ENCODE measurements at regions of chr17 and their contacts with region 1.

Region 1: DNA sequence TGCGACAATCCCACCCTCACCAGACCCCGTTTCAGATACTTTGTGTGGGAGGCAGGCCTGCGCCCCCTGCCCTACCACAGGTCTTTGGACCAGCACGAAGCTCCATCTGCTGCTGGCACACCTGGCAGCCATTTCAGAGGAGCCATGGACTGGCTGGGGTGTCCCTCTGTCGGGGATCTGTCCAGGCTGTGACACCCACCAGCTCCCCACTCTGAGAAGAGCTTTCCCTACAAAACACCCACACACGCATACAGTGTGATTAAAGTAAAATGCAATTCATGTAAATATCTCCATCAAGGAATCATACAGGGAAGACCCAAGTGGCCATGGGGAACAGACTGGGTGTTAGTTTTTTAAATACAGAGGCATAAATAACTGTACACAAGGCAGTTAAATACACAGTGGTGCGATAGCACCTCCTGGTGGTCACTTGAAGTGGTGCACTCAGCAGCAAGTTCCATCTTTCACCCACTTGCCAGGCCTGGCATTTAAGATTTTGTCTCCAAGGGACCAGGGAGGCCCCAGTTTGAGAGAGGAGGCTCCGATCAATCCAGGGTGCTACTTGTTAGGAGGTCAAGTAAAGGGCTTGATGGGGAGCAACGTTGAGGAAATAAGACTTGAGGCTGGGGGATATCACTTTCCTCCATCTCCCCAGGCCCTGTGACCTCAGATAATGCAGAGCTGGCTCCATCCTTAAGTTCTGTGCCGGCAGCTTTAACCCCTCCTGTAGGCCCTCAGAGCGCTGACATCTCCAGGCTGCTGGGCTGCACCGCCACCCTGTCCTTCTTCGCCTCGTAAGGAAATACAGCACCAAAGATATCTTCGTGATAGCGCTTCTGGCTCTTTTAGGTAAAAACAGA is 43.6 kb downstream of the NOS2 start:
- DNase-seq: peak in 3 of 5 donors; percentile 41 to 59 (median 53)
- H3K4me3 ChIP-seq: no peak overlapping the region
- H3K27ac ChIP-seq: no peak overlapping the region
- H3K4me1 ChIP-seq: no peaks in the 10 kb centered on the region
- H3K27me3 ChIP-seq: no peaks in the 10 kb centered on the region
- CTCF ChIP-seq: peak in 2 of 3 donors; percentile 25 to 39
- EP300 ChIP-seq: no peak
- POLR2A ChIP-seq: no peak

Region 2: GRCh38 chr17:27654654-27655524 is 101.9 kb before region 1 on chr17:
- intact Hi-C with region 1: loop called in 1 of 4 experiments (anchors 10 kb)
- DNase-seq: peak; percentile 42 to 79 (median 69)
- H3K4me3 ChIP-seq: no peak overlapping the region
- H3K27ac ChIP-seq: no peak overlapping the region
- H3K4me1 ChIP-seq: no peaks in the 10 kb centered on the region
- H3K27me3 ChIP-seq: no peaks in the 10 kb centered on the region
- CTCF ChIP-seq: peak; percentile 61 to 71 (median 63)
- EP300 ChIP-seq: no peak
- POLR2A ChIP-seq: no peak

Region 3: DNA sequence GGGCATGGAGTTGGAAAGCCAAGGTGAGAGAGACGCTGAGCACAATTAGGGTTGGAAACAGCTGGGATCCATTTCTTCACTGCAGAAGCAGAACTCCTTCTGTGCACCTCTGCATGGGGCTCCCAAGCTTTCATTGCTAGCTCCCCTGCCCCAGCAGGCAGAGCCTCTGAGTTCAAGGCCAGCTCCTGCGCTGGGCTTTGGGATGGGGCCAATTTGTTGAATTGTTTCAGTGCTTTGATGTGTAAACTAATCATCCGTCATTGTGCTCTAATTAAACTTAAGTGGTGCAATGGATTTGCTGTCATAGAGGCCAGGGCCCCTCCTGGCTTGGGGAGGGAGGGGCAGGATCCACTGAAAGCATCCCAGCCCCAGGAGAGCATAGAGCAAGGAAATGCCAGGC is 149.9 kb after region 1 on chr17:
- intact Hi-C with region 1: no loop called
- DNase-seq: peak in 2 of 5 donors; percentile 12 to 41
- H3K4me3 ChIP-seq: no peak overlapping the region
- H3K27ac ChIP-seq: no peak overlapping the region
- H3K4me1 ChIP-seq: no peaks in the 10 kb centered on the region
- H3K27me3 ChIP-seq: no peaks in the 10 kb centered on the region
- CTCF ChIP-seq: no peak
- EP300 ChIP-seq: no peak
- POLR2A ChIP-seq: no peak